ENCODE measurements at regions of chr12 and their contacts with region 1.

Region 1: GRCh38 chr12:21940549-21941505 is at the start of gene ABCC9:
- DNase-seq: peak; percentile 58 to 79 (median 74)
- ATAC-seq: peak; percentile 74 to 83 (median 77)
- H3K4me3 ChIP-seq: peak within 1 kb of the TSS; percentile 45 to 66 (median 56)
- H3K27ac ChIP-seq: peak within 1 kb of the TSS; percentile 84 to 95 (median 90)
- H3K4me1 ChIP-seq: peaks cover 0 to 18% (median 0%) of the 10 kb centered on the region in 12 donors
- H3K27me3 ChIP-seq: peaks cover 0 to 43% (median 0%) of the 10 kb centered on the region in 9 donors
- CTCF ChIP-seq: peak in 4 of 12 donors; percentile 10 to 29 (median 13)
- POLR2A ChIP-seq: peak in 1 of 2 donors; percentile 54
- total RNA-seq, gene ABCC9: 60.1 to 103 (median 80.0) TPM

Region 2: DNA sequence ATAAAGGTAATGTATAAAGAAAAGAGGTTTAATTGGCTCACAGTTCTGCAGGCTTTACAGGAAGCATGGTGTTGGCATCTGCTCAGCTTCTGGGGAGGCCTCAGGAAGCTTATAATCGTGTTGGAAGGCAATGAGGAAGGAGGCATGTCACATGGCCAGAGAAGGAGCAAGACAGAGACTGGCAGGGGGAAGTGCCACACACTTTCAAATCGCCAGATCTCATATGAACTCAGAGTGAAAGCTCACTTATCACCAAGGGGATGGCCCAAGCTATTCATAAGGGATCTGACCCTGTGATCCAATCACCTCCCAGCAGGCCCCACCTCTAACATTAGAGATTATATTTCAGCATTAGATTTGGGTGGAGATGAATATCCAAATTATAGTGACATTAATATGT is 309.5 kb before region 1 on chr12:
- intact Hi-C with region 1: no loop called
- DNase-seq: no peak
- ATAC-seq: no peak
- H3K4me3 ChIP-seq: no peak overlapping the region
- H3K27ac ChIP-seq: no peak overlapping the region
- H3K4me1 ChIP-seq: peaks cover 0 to 6% (median 0%) of the 10 kb centered on the region in 12 donors
- H3K27me3 ChIP-seq: no peaks in the 10 kb centered on the region
- CTCF ChIP-seq: no peak
- POLR2A ChIP-seq: no peak

Region 3: DNA sequence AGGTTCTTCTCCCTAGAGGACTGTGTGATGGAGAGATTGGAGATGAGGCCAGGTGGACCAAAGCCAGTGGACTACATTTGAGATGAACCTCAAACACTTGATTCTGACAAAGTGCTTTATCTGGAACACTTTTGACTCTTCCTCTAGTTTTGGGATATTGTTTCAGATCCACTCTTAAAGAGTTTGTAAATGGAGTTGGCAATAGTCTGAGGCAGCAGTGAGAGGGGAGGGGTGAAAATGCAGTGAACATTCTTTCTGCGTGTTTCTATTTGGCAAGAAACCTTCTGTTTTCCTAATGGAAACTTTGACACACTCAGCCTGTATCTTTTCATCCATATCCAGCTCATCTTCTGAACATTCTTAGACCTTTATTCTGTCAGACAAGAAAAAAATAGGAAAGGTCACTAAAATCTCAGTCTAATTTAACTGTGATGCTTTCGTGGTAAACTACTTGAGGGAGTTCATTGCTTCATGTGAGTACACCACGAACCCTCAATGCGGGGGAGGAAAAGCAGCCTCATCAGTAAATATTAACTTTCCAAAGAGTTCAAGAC is 109.0 kb before region 1 on chr12:
- intact Hi-C with region 1: loop called in 1 of 10 experiments (anchors 5 kb)
- DNase-seq: peak in 4 of 5 donors; percentile 29 to 41 (median 34)
- ATAC-seq: peak; percentile 71 to 82 (median 74)
- H3K4me3 ChIP-seq: no peak overlapping the region
- H3K27ac ChIP-seq: peak overlapping the region; percentile 4 to 79 (median 64)
- H3K4me1 ChIP-seq: peaks cover 0 to 25% (median 3%) of the 10 kb centered on the region in 12 donors
- H3K27me3 ChIP-seq: no peaks in the 10 kb centered on the region
- CTCF ChIP-seq: no peak
- POLR2A ChIP-seq: no peak

Region 4: DNA sequence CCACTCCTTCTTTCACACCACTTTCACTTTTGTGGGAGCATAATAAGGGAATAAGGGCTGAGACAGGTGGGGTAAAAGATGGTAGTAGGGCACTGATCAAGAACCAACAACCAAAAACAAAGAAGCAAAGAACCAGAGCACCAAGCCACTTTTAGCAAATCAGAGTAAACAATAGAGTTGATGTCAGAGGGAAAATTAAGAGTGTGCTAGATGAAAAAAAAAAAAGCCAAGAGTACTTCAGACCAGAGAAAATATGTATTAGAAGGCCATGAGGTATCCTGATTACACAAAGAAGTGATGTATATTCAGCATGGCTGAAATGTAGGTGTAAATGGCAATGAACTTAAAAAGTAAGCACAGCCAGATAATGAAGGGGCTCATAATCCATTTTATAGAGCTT is 75.0 kb before region 1 on chr12:
- intact Hi-C with region 1: no loop called
- DNase-seq: no peak
- ATAC-seq: no peak
- H3K4me3 ChIP-seq: no peak overlapping the region
- H3K27ac ChIP-seq: no peak overlapping the region
- H3K4me1 ChIP-seq: peaks cover 0 to 7% (median 0%) of the 10 kb centered on the region in 12 donors
- H3K27me3 ChIP-seq: no peaks in the 10 kb centered on the region
- CTCF ChIP-seq: no peak
- POLR2A ChIP-seq: no peak

Region 5: DNA sequence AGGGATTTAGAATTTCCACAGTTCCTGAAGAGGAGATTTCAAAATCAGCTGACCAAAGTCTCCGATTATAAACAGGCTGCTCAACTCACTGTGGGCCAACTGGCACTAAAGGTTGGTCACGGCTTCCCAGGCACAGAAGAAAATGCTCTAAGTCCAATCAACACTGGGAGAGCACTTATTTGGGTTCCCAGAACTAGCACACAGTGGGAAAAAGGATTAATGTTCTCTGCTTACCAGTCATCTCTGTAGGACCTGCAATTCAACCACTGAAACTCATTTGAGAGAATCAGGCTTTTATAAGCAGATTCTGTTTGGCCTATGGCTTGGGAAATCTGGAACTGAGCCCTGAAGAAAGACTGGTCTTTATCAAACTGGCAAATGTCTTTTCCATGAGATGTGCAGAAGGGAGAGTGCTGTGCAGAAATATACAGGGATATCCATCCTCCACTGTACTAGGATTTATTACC is 49.0 kb before region 1 on chr12:
- intact Hi-C with region 1: loop called in 2 of 10 experiments (anchors 5 kb)
- DNase-seq: peak in 4 of 5 donors; percentile 32 to 65 (median 44)
- ATAC-seq: peak; percentile 86 to 90 (median 88)
- H3K4me3 ChIP-seq: no peak overlapping the region
- H3K27ac ChIP-seq: peak overlapping the region; percentile 34 to 83 (median 60)
- H3K4me1 ChIP-seq: peaks cover 0 to 40% (median 15%) of the 10 kb centered on the region in 12 donors
- H3K27me3 ChIP-seq: no peaks in the 10 kb centered on the region
- CTCF ChIP-seq: no peak
- POLR2A ChIP-seq: no peak

Region 6: DNA sequence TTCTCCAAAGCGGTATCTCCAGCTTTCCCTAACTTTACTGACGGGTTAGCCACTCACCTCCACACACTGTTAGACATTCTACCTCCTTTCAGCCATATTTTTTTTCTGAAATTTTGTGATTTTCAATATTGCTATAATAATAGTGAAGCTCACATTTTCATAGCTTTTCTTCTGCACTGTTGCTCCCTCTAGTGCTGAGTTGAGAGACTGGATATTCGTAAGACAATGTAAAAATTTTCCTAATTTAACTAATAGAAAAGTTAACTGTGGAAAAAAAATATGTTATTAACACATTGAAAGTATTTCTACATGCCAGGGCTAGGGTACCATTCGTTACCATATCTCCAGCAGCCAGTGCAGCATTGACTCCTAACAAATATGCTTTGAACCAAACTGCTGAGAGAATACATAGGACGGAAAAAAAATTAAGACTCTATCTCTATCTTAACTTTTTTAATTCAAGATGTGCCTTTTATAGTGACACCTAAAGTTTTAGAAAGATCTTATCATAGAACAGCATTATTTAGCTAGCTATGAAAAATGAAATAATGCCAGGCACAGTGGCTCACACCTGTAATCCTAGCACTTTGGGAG is 49.1 kb after region 1 on chr12:
- intact Hi-C with region 1: loop called in 1 of 10 experiments (anchors 5 kb)
- DNase-seq: no peak
- ATAC-seq: peak in 1 of 4 donors; percentile 36
- H3K4me3 ChIP-seq: no peak overlapping the region
- H3K27ac ChIP-seq: no peak overlapping the region
- H3K4me1 ChIP-seq: peaks cover 0 to 6% (median 0%) of the 10 kb centered on the region in 12 donors
- H3K27me3 ChIP-seq: no peaks in the 10 kb centered on the region
- CTCF ChIP-seq: peak; percentile 28 to 73 (median 58)
- POLR2A ChIP-seq: no peak

Measured in heart left ventricle (tissue), 16 donors.